Calu3 (cell line): ENCODE measurements at regions of chr16 and their contacts with region 1.

Region 1: GRCh38 chr16:77171745-77172635 is 19.0 kb upstream of the MON1B start:
- DNase-seq: peak; percentile 66
- H3K4me3 Mint-ChIP-seq: no peak overlapping the region
- H3K27ac Mint-ChIP-seq: no peak overlapping the region
- H3K4me1 Mint-ChIP-seq: no peaks in the 10 kb centered on the region
- H3K27me3 Mint-ChIP-seq: peaks cover 64% of the 10 kb centered on the region
- CTCF ChIP-seq: peak; percentile 56

Region 2: GRCh38 chr16:75647492-75648264 is 1524.3 kb before region 1 on chr16 and contains the starts of genes KARS1 and TERF2IP:
- CTCF ChIA-PET with region 1: no interaction called
- intact Hi-C with region 1: loop called (anchors 10 kb)
- DNase-seq: peak; percentile 96
- H3K4me3 Mint-ChIP-seq: peak within 1 kb of the TSS; percentile 99
- H3K27ac Mint-ChIP-seq: peak within 1 kb of the TSS; percentile 97
- H3K4me1 Mint-ChIP-seq: peaks cover 44% of the 10 kb centered on the region
- H3K27me3 Mint-ChIP-seq: no peaks in the 10 kb centered on the region
- CTCF ChIP-seq: no peak
- total RNA-seq, gene KARS1: 198 and 207 TPM in 2 replicates
- total RNA-seq, gene TERF2IP: 45.3 and 48.3 TPM in 2 replicates

Region 3: DNA sequence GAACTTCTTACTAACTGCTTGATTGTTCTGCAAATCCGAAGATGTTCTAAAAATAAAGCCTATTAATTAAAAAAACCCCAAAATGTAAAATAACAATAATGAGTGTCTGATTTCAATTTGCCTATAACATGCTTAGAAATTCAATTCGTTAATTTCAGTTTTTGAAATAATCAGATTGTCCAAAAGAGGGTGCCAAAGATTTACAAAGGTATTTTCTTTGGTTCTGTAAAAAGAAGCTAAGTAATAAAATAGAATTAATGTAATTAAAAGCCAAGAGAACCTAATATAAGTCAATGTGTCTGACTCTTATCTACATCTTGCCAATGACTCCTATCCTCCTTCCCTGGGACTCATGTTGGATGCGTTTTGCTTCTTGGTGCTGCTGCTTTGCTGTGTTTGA is 1370.7 kb before region 1 on chr16:
- CTCF ChIA-PET with region 1: interaction called, 10 read pairs
- intact Hi-C with region 1: no loop called
- DNase-seq: no peak
- H3K4me3 Mint-ChIP-seq: no peak overlapping the region
- H3K27ac Mint-ChIP-seq: no peak overlapping the region
- H3K4me1 Mint-ChIP-seq: no peaks in the 10 kb centered on the region
- H3K27me3 Mint-ChIP-seq: peaks cover 27% of the 10 kb centered on the region
- CTCF ChIP-seq: no peak

Region 4: GRCh38 chr16:76668207-76668725 is 503.7 kb before region 1 on chr16:
- CTCF ChIA-PET with region 1: no interaction called
- intact Hi-C with region 1: loop called (anchors 5 kb)
- DNase-seq: peak; percentile 53
- H3K4me3 Mint-ChIP-seq: no peak overlapping the region
- H3K27ac Mint-ChIP-seq: no peak overlapping the region
- H3K4me1 Mint-ChIP-seq: peaks cover 32% of the 10 kb centered on the region
- H3K27me3 Mint-ChIP-seq: no peaks in the 10 kb centered on the region
- CTCF ChIP-seq: no peak

Region 5: GRCh38 chr16:76882077-76882476 is 289.9 kb before region 1 on chr16:
- CTCF ChIA-PET with region 1: no interaction called
- intact Hi-C with region 1: loop called (anchors 10 kb)
- DNase-seq: no peak
- H3K4me3 Mint-ChIP-seq: no peak overlapping the region
- H3K27ac Mint-ChIP-seq: no peak overlapping the region
- H3K4me1 Mint-ChIP-seq: no peaks in the 10 kb centered on the region
- H3K27me3 Mint-ChIP-seq: no peaks in the 10 kb centered on the region
- CTCF ChIP-seq: no peak

Region 6: GRCh38 chr16:77327717-77328116 is 155.7 kb after region 1 on chr16:
- CTCF ChIA-PET with region 1: no interaction called
- intact Hi-C with region 1: no loop called
- DNase-seq: no peak
- H3K4me3 Mint-ChIP-seq: no peak overlapping the region
- H3K27ac Mint-ChIP-seq: no peak overlapping the region
- H3K4me1 Mint-ChIP-seq: no peaks in the 10 kb centered on the region
- H3K27me3 Mint-ChIP-seq: no peaks in the 10 kb centered on the region
- CTCF ChIP-seq: no peak